Activated naive CD4-positive, alpha-beta T cell treated with anti-CD3 and anti-CD28 coated beads for 36 hours (primary cell): ENCODE measurements at regions of chr12 and their contacts with region 1.

Region 1: GRCh38 chr12:111451649-111452129 is 46.0 kb downstream of the SH2B3 start:
- DNase-seq: no peak
- H3K4me3 Mint-ChIP-seq: no peak overlapping the region
- H3K27ac Mint-ChIP-seq: peak overlapping the region; percentile 19
- H3K4me1 Mint-ChIP-seq: peaks cover 23% of the 10 kb centered on the region
- H3K27me3 Mint-ChIP-seq: no peaks in the 10 kb centered on the region

Region 2: GRCh38 chr12:111428728-111429175 is 22.9 kb before region 1 on chr12:
- CTCF ChIA-PET with region 1: interaction called, 42 read pairs
- intact Hi-C with region 1: loop called (anchors 1 kb)
- DNase-seq: peak; percentile 54
- H3K4me3 Mint-ChIP-seq: peak overlapping the region; percentile 84
- H3K27ac Mint-ChIP-seq: peak overlapping the region; percentile 84
- H3K4me1 Mint-ChIP-seq: peaks cover 91% of the 10 kb centered on the region
- H3K27me3 Mint-ChIP-seq: no peaks in the 10 kb centered on the region

Region 3: GRCh38 chr12:111471236-111471635 is 19.5 kb after region 1 on chr12:
- CTCF ChIA-PET with region 1: interaction called, 12 read pairs
- intact Hi-C with region 1: no loop called
- DNase-seq: no peak
- H3K4me3 Mint-ChIP-seq: no peak overlapping the region
- H3K27ac Mint-ChIP-seq: no peak overlapping the region
- H3K4me1 Mint-ChIP-seq: peaks cover 7% of the 10 kb centered on the region
- H3K27me3 Mint-ChIP-seq: no peaks in the 10 kb centered on the region

Region 4: DNA sequence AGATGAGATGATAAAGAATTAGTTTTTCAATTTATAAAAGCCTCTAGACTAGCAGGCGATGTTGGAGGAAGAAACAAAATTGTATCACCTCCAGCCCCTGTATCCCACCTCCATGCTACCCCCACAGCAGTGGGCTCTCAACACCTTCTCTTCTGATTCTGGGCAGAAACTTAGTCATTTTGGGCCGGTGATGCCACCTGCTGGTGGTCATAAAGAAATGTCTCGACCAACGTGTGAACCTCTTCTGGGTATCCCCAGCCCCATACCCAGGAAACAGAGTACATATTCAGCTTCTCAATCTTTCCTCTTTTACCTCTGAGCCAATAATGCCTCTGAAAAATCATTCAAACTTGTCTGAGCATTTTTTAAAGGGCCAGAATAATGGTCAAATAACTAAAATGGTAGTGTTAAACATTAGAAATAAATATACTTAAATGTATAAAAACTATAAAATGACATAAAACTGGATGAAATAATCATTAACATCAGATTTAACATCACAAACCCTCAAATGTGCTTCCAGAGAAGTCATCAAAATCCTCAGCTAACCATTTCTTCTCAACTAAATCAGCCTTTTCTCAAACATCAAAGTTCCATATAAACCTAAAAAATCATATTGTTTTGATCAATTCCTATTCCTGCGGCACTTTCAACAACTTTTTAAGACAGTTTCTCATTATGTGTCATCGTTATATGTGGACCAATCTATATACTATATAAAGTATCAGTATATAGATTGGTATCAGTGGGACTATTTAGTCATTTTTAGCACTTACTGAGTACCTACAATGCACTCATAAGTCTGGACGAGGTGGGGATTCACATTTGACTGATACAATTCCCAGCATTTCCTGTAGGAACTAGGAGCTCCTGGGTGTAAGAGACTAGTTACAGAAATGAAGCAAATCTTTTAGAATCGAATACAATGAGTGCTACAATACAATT is 78.0 kb after region 1 on chr12:
- CTCF ChIA-PET with region 1: interaction called, 10 read pairs
- intact Hi-C with region 1: loop called (anchors 1 kb)
- DNase-seq: peak; percentile 77
- H3K4me3 Mint-ChIP-seq: no peak overlapping the region
- H3K27ac Mint-ChIP-seq: no peak overlapping the region
- H3K4me1 Mint-ChIP-seq: peaks cover 11% of the 10 kb centered on the region
- H3K27me3 Mint-ChIP-seq: no peaks in the 10 kb centered on the region